OCI-LY7 (cell line): ENCODE measurements at regions of chr13 and their contacts with region 1.

Region 1: DNA sequence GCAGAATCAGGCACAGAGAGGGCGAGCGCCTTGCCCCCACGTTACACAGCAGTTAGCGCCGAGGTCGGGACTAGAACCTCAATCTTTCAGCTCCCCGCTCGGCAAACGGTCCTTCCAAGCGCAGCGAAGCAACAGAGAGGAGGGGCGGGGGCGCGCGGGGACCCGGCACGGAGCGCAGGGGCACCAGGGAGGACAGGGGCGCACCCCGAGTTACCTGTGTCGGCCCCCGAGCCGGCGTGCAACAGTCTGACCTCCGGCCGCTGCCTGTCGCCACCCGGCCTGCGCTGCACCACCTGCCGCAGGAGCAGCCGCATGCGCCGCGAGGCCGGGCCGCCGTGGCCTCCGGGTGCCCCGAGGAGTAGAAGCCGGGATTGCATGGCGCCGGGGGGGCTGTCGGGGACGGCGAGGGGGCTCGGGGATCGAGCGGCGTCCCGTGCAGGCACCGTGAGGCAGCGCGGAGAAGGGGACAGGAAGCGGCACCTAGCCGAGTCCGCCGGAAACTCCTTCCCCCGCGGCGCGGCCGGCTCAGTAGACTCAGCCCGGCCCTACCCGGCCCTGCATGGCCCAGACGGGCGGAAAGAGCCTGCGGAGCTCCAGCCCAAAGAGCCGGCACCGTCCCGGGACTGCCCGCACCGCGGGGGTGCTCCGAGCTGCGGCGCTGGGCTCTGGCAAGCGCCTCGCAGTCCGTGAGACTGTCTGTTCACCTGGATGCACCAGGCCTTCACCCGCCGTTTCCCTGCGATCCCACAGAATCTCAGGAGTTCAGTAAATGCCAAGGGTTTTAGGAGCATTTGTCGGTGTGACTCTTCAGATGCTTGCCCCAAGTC is at the start of gene VWA8:
- DNase-seq: peak; percentile 91
- H3K4me3 ChIP-seq: peak within 1 kb of the TSS; percentile 92
- H3K27ac ChIP-seq: peak within 1 kb of the TSS; percentile 60
- H3K4me1 ChIP-seq: peaks cover 31% of the 10 kb centered on the region
- CTCF ChIP-seq: no peak
- total RNA-seq, gene VWA8: 16.1 and 26.4 TPM in 2 replicates

Region 2: GRCh38 chr13:40164133-40164532 is 1796.7 kb before region 1 on chr13:
- CTCF ChIA-PET with region 1: no interaction called
- POLR2A ChIA-PET with region 1: no interaction called
- intact Hi-C with region 1: no loop called
- DNase-seq: no peak
- H3K4me3 ChIP-seq: no peak overlapping the region
- H3K27ac ChIP-seq: no peak overlapping the region
- H3K4me1 ChIP-seq: peaks cover 8% of the 10 kb centered on the region
- CTCF ChIP-seq: no peak

Region 3: DNA sequence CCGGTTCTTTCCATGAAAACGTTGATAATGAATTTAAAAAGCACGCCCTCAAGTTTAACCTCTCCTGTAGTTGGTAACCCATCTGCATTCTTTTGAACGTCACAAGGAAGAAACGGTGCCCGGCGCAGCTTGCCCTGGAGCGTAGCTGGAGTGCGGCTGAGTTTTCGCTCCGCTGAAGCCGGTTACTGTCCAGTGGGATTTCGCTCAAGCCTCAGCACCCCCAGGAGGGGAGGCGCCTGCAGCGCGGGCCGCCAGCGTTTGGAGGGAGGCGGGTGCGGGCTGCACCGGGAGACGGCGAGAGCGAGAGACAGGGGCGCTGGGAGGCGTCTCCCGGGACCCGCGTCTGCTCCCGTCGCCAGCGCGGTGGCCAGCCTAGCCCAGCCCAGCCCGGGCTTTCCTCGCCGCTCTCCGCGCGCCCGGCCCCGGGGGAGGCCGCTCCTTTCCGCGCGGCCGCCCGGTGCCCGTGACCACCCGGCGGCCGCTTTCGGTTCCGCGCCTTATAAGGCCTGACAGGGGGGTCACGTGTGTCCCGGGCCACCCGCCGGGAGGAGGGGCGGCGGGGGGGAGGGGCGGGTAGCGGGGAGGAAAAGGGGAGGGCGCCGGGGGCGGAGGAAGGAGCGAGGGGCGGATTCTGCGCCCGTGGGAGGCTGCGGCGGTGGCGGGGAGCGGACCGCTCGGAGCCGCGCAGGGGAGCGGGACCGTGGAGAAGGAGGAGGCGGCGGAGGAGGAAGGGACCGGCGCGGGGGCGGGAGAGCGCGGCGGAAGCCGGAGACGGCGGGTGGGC is 79.3 kb after region 1 on chr13:
- CTCF ChIA-PET with region 1: no interaction called
- POLR2A ChIA-PET with region 1: interaction called, 6 read pairs
- intact Hi-C with region 1: loop called (anchors 1 kb)
- DNase-seq: peak; percentile 92
- H3K4me3 ChIP-seq: peak overlapping the region; percentile 71
- H3K27ac ChIP-seq: peak overlapping the region; percentile 10
- H3K4me1 ChIP-seq: peaks cover 14% of the 10 kb centered on the region
- CTCF ChIP-seq: 0 out of 2 replicates have a peak, but pooled peaks have one; percentile 15

Region 4: GRCh38 chr13:42363941-42364612 is 403.2 kb after region 1 on chr13:
- CTCF ChIA-PET with region 1: no interaction called
- POLR2A ChIA-PET with region 1: no interaction called
- intact Hi-C with region 1: no loop called
- DNase-seq: no peak
- H3K4me3 ChIP-seq: no peak overlapping the region
- H3K27ac ChIP-seq: no peak overlapping the region
- H3K4me1 ChIP-seq: no peaks in the 10 kb centered on the region
- CTCF ChIP-seq: no peak